Endothelial cell of umbilical vein (primary cell): ENCODE measurements at regions of chr1 and their contacts with region 1.

Region 1: GRCh38 chr1:89843281-89844121 is 22.7 kb downstream of the LRRC8D start:
- DNase-seq: peak; percentile 75
- H3K4me3 ChIP-seq: peak overlapping the region; percentile 68 to 97 (median 91)
- H3K27ac ChIP-seq: peak overlapping the region; percentile 67
- H3K4me1 ChIP-seq: peaks cover 20% of the 10 kb centered on the region
- H3K27me3 ChIP-seq: no peaks in the 10 kb centered on the region
- CTCF ChIP-seq: peak; percentile 65 to 69
- POLR2A ChIP-seq: peak; percentile 57

Region 2: GRCh38 chr1:89804642-89805237 is 38.8 kb before region 1 on chr1:
- CTCF ChIA-PET with region 1: interaction called, 21 read pairs
- POLR2A ChIA-PET with region 1: no interaction called
- dilution Hi-C with region 1: no loop called
- intact Hi-C with region 1: loop called (anchors 1 kb)
- DNase-seq: peak; percentile 89
- H3K4me3 ChIP-seq: no peak overlapping the region
- H3K27ac ChIP-seq: no peak overlapping the region
- H3K4me1 ChIP-seq: peaks cover 2% of the 10 kb centered on the region
- H3K27me3 ChIP-seq: peaks cover 0 to 2% of the 10 kb centered on the region in 2 experiments
- CTCF ChIP-seq: peak; percentile 78 to 86
- POLR2A ChIP-seq: no peak

Region 3: GRCh38 chr1:89855413-89856123 is 12.1 kb after region 1 on chr1:
- CTCF ChIA-PET with region 1: interaction called, 11 read pairs
- POLR2A ChIA-PET with region 1: no interaction called
- dilution Hi-C with region 1: no loop called
- intact Hi-C with region 1: no loop called
- DNase-seq: peak; percentile 60
- H3K4me3 ChIP-seq: no peak overlapping the region
- H3K27ac ChIP-seq: peak overlapping the region; percentile 41
- H3K4me1 ChIP-seq: peaks cover 17% of the 10 kb centered on the region
- H3K27me3 ChIP-seq: no peaks in the 10 kb centered on the region
- CTCF ChIP-seq: no peak
- POLR2A ChIP-seq: no peak

Region 4: DNA sequence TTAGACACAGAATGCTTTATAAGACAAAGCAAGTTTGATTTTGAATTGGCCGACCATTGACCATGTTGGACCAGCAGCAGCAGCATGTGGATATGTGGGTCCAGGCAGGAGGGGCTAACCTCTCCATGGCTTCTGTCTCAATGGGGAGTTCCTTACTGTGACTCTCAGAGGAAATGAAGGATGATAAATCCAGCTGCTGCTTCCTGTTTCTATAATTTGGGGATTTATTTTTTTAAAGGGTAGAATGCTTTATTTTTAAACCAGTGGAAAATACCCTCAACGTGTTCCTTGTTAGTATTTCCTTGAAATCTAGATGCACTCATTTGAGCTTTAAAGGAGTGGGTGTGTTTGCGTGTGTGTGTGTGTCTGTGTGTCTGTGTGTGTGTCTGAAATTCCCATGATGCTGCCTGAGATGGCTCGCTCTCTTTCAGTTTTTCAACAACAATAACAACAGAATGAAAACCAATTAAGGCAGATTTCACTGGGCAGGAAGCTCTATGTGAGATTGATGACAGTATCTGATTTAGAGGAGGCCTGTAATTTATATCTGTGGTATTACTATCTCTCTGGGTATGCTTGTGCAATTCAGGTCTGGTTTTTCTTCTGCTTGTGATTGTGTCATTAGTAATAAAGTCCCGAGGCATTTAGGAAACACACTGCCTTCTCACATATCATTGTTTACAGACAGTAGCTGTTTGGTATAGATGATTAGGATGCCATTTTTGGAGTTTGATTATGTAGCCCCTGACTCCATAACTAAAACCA is 65.4 kb after region 1 on chr1:
- CTCF ChIA-PET with region 1: interaction called, 13 read pairs
- POLR2A ChIA-PET with region 1: interaction called, 5 read pairs
- dilution Hi-C with region 1: no loop called
- intact Hi-C with region 1: loop called (anchors 1 kb)
- DNase-seq: peak; percentile 70
- H3K4me3 ChIP-seq: no peak overlapping the region
- H3K27ac ChIP-seq: peak overlapping the region; percentile 84
- H3K4me1 ChIP-seq: peaks cover 66% of the 10 kb centered on the region
- H3K27me3 ChIP-seq: no peaks in the 10 kb centered on the region
- CTCF ChIP-seq: no peak
- POLR2A ChIP-seq: no peak

Region 5: DNA sequence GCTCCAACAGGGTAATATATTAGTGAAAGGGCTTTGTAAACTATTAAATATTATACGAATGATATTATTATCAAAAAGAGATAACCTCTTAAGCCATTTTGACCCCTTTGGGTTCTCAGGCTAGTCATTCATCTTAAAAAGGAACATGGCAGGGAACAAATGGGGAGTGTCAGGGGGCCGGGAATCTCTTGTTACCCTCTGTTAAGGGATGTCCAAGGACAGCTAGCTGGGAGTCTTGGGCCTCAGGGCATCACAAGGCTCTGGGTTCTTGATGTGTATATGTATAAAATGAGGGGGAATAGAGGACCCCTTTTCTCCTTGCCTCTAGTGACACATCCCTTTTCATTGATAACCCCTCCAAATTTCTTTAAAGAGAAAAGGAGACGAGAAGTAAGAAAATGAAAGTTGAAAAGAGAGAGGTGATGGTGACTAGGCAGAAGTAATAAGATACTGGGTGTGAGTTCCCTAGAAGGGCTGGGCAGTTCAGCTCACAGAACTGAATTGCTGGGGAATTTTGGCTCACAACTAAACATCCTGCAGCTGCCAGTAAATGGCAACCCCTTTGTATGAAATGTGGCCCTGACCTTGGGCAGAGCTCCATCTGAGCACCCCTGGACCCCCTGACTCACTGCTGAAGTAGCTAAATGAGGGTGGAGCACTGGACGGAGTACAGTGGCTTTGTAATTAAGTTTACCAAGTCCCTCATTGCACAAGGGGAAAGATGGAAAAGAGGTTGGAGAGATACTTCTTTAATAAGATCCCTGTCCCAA is 131.4 kb after region 1 on chr1:
- CTCF ChIA-PET with region 1: interaction called, 11 read pairs
- POLR2A ChIA-PET with region 1: no interaction called
- dilution Hi-C with region 1: no loop called
- intact Hi-C with region 1: no loop called
- DNase-seq: peak; percentile 45
- H3K4me3 ChIP-seq: no peak overlapping the region
- H3K27ac ChIP-seq: no peak overlapping the region
- H3K4me1 ChIP-seq: peaks cover 19% of the 10 kb centered on the region
- H3K27me3 ChIP-seq: no peaks in the 10 kb centered on the region
- CTCF ChIP-seq: no peak
- POLR2A ChIP-seq: no peak

Region 6: DNA sequence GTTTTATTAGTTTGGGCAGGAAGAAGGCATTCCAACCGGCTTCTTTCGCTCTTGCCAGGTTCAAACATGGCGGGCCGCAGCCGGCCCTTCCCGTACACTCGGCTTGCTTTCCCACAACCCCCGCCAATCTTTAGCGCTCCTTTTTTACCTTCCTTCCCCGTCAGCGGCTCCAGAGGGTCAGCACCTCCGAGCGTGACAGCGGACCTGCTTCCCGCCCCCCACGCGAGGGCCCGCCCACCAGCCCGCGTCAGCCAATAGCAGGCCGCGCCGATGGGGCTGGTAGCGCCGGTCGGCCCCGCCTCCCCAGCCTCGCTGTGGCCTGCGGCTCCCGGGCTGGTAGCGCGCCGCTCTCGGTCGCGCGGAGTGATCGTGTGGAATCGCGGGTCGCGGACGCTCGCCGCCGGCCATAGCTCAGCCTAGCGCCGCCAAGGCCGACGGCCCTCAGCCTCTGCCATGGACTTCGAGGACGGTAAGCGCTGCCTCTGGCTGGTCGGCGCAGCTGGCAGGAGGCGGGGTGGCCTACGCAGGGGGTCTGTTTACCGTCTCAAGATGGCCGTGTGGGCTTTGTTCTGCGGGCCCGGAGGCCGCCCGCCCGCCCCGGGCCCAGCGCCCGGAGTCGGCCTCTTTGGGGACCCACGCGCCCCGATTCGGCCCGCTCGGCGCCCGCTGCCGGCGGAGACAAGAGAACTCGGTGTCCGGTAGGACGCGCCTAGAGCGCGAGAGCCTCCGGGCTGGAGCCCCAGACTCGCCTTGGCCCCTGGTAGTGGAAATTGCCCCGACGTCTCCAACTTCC is 151.5 kb after region 1 on chr1 and contains the start of gene ZNF326:
- CTCF ChIA-PET with region 1: interaction called, 7 read pairs
- POLR2A ChIA-PET with region 1: no interaction called
- dilution Hi-C with region 1: no loop called
- intact Hi-C with region 1: loop called (anchors 2 kb)
- DNase-seq: peak; percentile 98
- H3K4me3 ChIP-seq: peak within 1 kb of the TSS; percentile 89 to 99 (median 98)
- H3K27ac ChIP-seq: peak within 1 kb of the TSS; percentile 94
- H3K4me1 ChIP-seq: peaks cover 19% of the 10 kb centered on the region
- H3K27me3 ChIP-seq: no peaks in the 10 kb centered on the region
- CTCF ChIP-seq: no peak
- POLR2A ChIP-seq: peak; percentile 98
- total RNA-seq, gene ZNF326: 29.7 and 29.9 TPM in 2 replicates